Activated CD4-positive, alpha-beta T cell treated with anti-CD3 and anti-CD28 coated beads for 36 hours (primary cell): ENCODE measurements at regions of chr1 and their contacts with region 1.

Region 1: DNA sequence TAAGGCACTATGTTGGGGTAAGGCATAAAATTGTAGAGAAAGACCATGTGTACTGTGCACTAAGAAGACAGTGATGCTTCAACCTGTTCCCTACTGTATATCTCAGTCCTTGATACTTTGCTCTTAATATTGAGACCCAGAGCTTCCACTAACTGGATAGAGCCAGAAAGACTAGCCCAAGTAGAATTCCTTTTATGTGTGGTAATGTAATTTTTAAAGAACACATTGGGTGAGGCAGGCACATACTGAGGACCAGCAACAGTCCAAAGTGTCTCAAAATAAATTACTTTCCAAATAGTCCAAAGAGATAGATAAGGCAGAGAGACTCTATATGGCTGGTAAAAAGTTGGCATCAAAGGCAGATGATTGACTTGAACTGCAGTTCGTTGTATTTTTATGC is 31.4 kb upstream of the MROH9 start:
- DNase-seq: no peak
- ATAC-seq: no peak
- H3K4me3 Mint-ChIP-seq: no peak overlapping the region
- H3K27ac Mint-ChIP-seq: no peak overlapping the region
- H3K4me1 Mint-ChIP-seq: no peaks in the 10 kb centered on the region
- H3K27me3 Mint-ChIP-seq: peaks cover 4% of the 10 kb centered on the region

Region 2: GRCh38 chr1:170590921-170591705 is 312.8 kb before region 1 on chr1:
- CTCF ChIA-PET with region 1: no interaction called
- POLR2A ChIA-PET with region 1: no interaction called
- intact Hi-C with region 1: loop called in 1 of 2 experiments (anchors 1 kb)
- DNase-seq: no peak
- ATAC-seq: no peak
- H3K4me3 Mint-ChIP-seq: no peak overlapping the region
- H3K27ac Mint-ChIP-seq: no peak overlapping the region
- H3K4me1 Mint-ChIP-seq: peaks cover 6% of the 10 kb centered on the region
- H3K27me3 Mint-ChIP-seq: peaks cover 28% of the 10 kb centered on the region

Region 3: DNA sequence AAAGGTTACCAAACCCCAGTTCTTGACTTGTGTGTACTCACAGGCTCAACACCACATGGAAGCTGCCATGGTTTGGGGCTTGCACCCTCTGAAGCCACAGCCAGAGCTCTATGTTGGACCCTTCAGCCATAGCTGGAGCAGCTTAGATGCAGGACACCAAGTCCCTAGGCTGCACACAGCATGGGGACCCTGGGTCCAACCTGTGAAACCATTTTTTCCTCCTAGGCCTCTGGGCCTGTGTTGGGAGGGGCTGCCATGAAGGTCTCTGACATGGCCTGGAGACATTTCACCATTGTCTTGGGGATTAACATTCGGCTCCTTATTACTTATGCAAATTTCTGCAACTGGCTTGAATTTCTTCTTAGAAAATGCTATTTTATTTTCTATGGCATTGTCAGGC is 302.1 kb before region 1 on chr1:
- CTCF ChIA-PET with region 1: no interaction called
- POLR2A ChIA-PET with region 1: no interaction called
- intact Hi-C with region 1: no loop called
- DNase-seq: no peak
- ATAC-seq: no peak
- H3K4me3 Mint-ChIP-seq: no peak overlapping the region
- H3K27ac Mint-ChIP-seq: no peak overlapping the region
- H3K4me1 Mint-ChIP-seq: no peaks in the 10 kb centered on the region
- H3K27me3 Mint-ChIP-seq: peaks cover 2% of the 10 kb centered on the region

Region 4: GRCh38 chr1:170864238-170864637 is 39.7 kb before region 1 on chr1:
- CTCF ChIA-PET with region 1: no interaction called
- POLR2A ChIA-PET with region 1: no interaction called
- intact Hi-C with region 1: no loop called
- DNase-seq: no peak
- ATAC-seq: no peak
- H3K4me3 Mint-ChIP-seq: no peak overlapping the region
- H3K27ac Mint-ChIP-seq: no peak overlapping the region
- H3K4me1 Mint-ChIP-seq: no peaks in the 10 kb centered on the region
- H3K27me3 Mint-ChIP-seq: peaks cover 3% of the 10 kb centered on the region